Activated CD8-positive, alpha-beta memory T cell treated with anti-CD3 and anti-CD28 coated beads, Interleukin-2, amount 10 ng/mL, durations not matched to agents 7 days and 5 days (primary cell): ENCODE measurements at regions of chr1 and their contacts with region 1.

Region 1: DNA sequence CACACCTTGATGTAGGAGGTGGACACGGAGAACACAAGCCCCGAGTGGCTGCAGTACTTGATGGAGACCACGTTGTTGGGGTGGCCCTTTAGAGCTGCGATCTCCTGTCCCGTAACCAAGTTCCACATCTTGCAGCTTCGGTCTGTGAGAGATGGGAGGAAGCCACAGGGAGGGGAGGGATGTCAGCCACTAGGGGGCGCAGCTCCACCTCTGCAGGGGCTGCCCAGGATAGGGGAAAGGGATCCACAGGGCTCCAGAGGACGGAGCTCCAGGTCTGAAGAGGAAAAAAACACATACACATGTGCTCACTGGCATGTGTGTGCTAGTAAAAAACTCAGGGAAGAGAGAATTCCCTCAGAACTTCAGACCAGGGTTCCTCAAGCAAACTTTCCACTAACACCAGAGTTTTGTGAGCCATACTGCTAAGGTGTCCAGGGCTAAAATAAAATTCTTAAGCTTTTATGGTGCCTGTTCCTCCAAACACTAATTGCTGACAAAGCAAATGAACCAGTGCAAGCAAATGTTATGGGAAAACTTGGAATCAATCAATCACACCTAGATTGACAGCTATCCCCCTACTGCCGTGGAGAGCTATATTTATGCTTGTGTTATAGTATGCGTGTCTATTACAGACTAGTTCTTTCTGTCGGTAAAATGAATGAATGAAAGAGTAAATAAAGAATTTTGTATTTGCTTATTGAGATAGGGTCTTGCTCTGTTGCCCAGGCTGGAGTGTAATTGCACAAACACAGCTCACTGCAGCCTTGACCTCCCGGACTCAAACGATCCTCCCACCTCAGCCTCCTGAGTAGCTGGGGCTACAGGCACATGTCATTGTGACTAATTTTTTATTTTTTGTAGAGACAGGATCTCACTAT is 43.7 kb downstream of the KIF21B start:
- DNase-seq: peak; percentile 71
- ATAC-seq: peak; percentile 74
- H3K4me3 Mint-ChIP-seq: no peak overlapping the region
- H3K27ac Mint-ChIP-seq: no peak overlapping the region
- H3K4me1 Mint-ChIP-seq: no peaks in the 10 kb centered on the region
- H3K27me3 Mint-ChIP-seq: no peaks in the 10 kb centered on the region

Region 2: DNA sequence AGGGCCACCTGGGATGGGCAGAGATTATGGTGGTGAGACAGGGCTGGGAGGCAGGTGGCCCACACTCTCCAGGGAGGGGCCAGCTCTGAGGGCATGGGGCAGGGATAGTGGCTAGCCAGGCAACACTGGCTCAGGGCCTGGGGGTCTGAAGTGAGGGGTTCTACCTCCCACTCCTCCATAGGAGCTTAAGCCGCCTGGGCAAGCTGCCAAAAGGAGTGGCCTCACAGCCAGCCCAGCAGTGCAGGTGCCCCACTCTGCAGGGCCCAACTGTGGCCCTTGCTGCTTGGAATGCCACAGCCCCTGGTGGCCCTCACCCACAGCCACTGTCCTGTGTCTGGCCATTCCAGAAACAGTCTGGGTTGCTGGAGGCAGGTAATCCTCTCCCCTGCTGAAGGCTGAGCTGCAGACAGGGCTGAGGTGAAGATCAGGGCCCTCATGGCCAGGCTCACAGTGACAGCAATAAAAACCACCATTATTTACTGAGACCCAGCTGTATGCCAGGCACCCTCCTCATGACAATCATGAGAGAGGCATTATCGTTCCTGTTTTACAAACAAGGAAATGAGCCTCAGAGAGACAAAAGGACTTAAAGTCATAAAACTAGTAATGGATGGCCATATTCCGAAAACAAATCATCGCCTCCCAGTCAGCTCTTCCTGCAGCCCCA is 12.7 kb after region 1 on chr1:
- CTCF ChIA-PET with region 1: interaction called, 18 read pairs
- DNase-seq: no peak
- ATAC-seq: no peak
- H3K4me3 Mint-ChIP-seq: no peak overlapping the region
- H3K27ac Mint-ChIP-seq: no peak overlapping the region
- H3K4me1 Mint-ChIP-seq: no peaks in the 10 kb centered on the region
- H3K27me3 Mint-ChIP-seq: no peaks in the 10 kb centered on the region

Region 3: DNA sequence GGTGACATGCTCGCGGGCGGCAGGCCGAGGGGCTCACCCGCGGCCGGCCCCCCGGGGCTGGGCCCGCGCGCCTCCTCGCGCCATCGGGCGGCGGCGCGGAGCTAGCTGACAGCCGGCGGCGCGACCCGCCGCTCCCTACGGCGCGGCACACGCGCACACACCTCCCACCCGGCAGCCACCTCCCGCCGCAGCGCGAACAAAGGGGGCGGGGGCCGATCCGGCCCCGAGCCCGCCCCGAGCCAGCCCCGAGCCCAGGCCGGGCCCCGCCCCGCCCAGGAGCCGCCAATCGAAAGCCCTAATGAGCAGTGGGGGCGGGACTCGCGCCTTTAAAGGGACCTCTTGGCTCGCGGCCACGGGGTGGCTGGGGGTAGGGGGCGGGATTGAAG is 43.7 kb after region 1 on chr1 and contains the start of gene KIF21B:
- CTCF ChIA-PET with region 1: interaction called, 38 read pairs
- DNase-seq: peak; percentile 93
- ATAC-seq: peak; percentile 78
- H3K4me3 Mint-ChIP-seq: peak within 1 kb of the TSS; percentile 91
- H3K27ac Mint-ChIP-seq: peak within 1 kb of the TSS; percentile 99
- H3K4me1 Mint-ChIP-seq: peaks cover 72% of the 10 kb centered on the region
- H3K27me3 Mint-ChIP-seq: no peaks in the 10 kb centered on the region
- total RNA-seq, gene KIF21B: 102 to 155 TPM

Region 4: DNA sequence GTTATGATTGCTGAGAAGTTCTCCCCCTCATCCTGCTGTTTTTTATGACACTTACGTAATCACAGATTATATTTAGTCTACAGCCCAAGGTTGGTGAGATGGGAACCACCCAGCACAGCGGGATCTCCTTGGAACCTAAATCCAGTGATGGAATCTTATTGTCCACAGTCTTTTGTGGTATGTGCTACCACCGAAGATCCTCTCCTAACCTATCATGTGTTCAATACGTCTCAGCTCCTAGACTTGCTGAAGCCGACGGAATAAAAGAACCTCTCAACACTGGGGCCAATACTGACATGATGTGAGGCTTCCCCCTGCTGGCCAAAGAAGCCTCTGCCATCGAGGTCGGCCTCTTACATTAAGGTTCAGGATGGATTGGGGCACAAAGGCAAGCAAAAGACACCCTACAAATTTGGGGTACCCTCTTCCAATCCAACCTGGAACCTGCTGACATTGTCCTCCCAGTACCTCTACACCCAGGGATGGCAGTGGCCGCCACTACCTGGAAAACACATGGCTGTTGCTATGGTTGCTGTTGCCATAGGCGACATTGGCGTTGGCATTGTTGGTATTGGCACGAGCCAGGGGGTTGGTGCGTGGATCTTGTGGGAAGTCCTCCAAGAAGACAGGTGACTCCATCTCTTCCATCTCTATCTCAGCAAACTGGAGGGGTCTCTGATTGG is 63.1 kb after region 1 on chr1:
- CTCF ChIA-PET with region 1: interaction called, 113 read pairs
- DNase-seq: peak; percentile 80
- ATAC-seq: peak; percentile 94
- H3K4me3 Mint-ChIP-seq: no peak overlapping the region
- H3K27ac Mint-ChIP-seq: no peak overlapping the region
- H3K4me1 Mint-ChIP-seq: peaks cover 4% of the 10 kb centered on the region
- H3K27me3 Mint-ChIP-seq: peaks cover 12% of the 10 kb centered on the region

Region 5: GRCh38 chr1:201114236-201115131 is 134.7 kb after region 1 on chr1:
- CTCF ChIA-PET with region 1: interaction called, 12 read pairs
- DNase-seq: peak; percentile 82
- ATAC-seq: peak; percentile 92
- H3K4me3 Mint-ChIP-seq: peak overlapping the region; percentile 71
- H3K27ac Mint-ChIP-seq: no peak overlapping the region
- H3K4me1 Mint-ChIP-seq: peaks cover 5% of the 10 kb centered on the region
- H3K27me3 Mint-ChIP-seq: peaks cover 46% of the 10 kb centered on the region